ENCODE measurements at regions of chr3 and their contacts with region 1.

Region 1: DNA sequence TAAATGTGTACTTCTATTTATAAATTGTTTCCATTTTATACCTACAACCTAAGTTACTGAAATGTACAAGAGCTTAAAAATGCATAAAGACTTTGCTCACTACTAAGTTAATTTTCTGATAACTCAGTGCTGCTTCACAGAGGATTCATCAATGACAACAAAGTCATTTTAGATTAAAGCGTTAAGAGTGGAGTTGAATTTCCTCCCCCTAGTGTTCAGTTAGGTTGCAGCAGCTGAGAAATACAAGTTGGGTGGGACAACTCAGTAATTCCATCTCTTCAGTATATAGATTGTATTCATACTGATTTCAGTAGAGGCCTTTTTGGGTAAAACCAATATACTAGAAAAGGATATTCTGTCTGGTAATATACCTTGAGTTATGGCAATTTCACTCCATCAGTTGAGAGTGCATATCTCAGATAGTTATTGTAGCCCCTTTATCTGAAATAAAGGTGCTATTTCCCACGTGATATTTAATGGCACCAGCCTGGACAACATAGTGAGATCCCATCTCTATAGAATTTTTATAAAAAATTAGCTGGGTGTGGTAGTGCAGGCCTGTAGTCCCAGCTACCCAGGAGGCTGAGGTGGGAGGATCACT is 6.9 kb upstream of the RPL35A start:
- DNase-seq: no peak
- ATAC-seq: no peak
- H3K4me3 ChIP-seq: no peak overlapping the region
- H3K27ac ChIP-seq: no peak overlapping the region
- H3K4me1 ChIP-seq: no peaks in the 10 kb centered on the region
- H3K27me3 ChIP-seq: no peaks in the 10 kb centered on the region
- CTCF ChIP-seq: peak in 4 of 5 experiments; percentile 25 to 61 (median 47)
- POLR2A ChIP-seq: no peak

Region 2: GRCh38 chr3:197478746-197479668 is 464.0 kb before region 1 on chr3:
- in situ Hi-C with region 1: no loop called
- intact Hi-C with region 1: no loop called
- DNase-seq: no peak
- ATAC-seq: no peak
- H3K4me3 ChIP-seq: no peak overlapping the region
- H3K27ac ChIP-seq: no peak overlapping the region
- H3K4me1 ChIP-seq: no peaks in the 10 kb centered on the region
- H3K27me3 ChIP-seq: peaks cover 0 to 4% (median 0%) of the 10 kb centered on the region in 3 donors
- CTCF ChIP-seq: no peak
- POLR2A ChIP-seq: no peak

Region 3: GRCh38 chr3:197906023-197906849 is 36.8 kb before region 1 on chr3:
- in situ Hi-C with region 1: no loop called
- intact Hi-C with region 1: loop called (anchors 2 kb)
- DNase-seq: peak; percentile 65 to 76
- ATAC-seq: peak; percentile 70 to 79
- H3K4me3 ChIP-seq: no peak overlapping the region
- H3K27ac ChIP-seq: no peak overlapping the region
- H3K4me1 ChIP-seq: no peaks in the 10 kb centered on the region
- H3K27me3 ChIP-seq: no peaks in the 10 kb centered on the region
- CTCF ChIP-seq: peak; percentile 70 to 94 (median 80)
- POLR2A ChIP-seq: no peak

Measured in gastrocnemius medialis (tissue), 4 donors.